ENCODE measurements at regions of chrX and their contacts with region 1.

Region 1: GRCh38 chrX:108224727-108225621 is 133.4 kb downstream of the ATG4A start:
- H3K4me3 ChIP-seq: no peak overlapping the region
- H3K27ac ChIP-seq: no peak overlapping the region
- H3K4me1 ChIP-seq: no peaks in the 10 kb centered on the region
- CTCF ChIP-seq: peak; percentile 36; the same call in 1 of the 2 replicates

Region 2: GRCh38 chrX:108199691-108200090 is 25.3 kb before region 1 on chrX:
- CTCF ChIA-PET with region 1: interaction called, 15 read pairs
- POLR2A ChIA-PET with region 1: no interaction called
- H3K4me3 ChIP-seq: no peak overlapping the region
- H3K27ac ChIP-seq: no peak overlapping the region
- H3K4me1 ChIP-seq: no peaks in the 10 kb centered on the region
- CTCF ChIP-seq: peak; percentile 47; the same call in 1 of the 2 replicates

Region 3: GRCh38 chrX:108209006-108209554 is 15.9 kb before region 1 on chrX:
- CTCF ChIA-PET with region 1: interaction called, 51 read pairs
- POLR2A ChIA-PET with region 1: no interaction called
- H3K4me3 ChIP-seq: no peak overlapping the region
- H3K27ac ChIP-seq: no peak overlapping the region
- H3K4me1 ChIP-seq: no peaks in the 10 kb centered on the region
- CTCF ChIP-seq: no peak

Region 4: DNA sequence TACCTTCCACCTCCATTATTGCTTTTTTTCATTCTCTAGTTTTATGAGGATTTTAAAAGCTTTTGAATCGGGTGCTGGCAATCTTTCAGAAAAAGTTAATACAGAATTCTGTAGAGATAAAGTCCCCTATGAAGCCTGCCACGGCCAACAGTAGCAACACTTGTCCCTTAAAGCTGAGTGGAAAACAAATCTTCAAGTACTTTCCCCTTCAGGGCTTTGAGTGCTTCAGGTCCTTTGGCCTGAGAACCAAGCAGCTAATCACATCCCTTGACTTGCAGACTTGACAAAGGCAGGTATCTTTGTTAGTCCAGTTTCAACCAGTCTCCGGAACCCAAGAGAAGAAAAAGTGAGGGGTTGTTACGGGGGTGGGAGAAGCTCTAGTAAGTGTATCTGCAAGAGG is 11.0 kb after region 1 on chrX:
- CTCF ChIA-PET with region 1: interaction called, 20 read pairs
- POLR2A ChIA-PET with region 1: no interaction called
- H3K4me3 ChIP-seq: no peak overlapping the region
- H3K27ac ChIP-seq: no peak overlapping the region
- H3K4me1 ChIP-seq: no peaks in the 10 kb centered on the region
- CTCF ChIP-seq: no peak

Region 5: DNA sequence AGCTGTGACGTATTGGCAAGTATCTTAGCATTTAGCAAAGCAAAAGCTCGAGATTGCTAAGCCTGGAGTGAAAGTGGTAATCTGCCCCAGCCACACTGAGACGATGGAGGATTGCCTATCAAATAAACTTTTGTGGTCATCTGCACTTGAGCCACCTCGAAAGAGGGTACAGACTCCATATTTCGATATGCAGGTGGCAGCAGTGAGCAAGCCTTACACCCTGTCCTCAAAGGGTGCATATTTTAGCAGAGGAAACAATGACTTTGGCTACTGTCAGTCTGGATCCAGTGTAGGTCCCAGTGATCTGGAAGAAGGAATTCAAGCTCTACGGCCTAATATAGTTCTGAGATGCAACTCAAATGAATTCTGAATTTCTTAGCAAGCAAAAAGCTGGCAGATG is 20.5 kb after region 1 on chrX:
- CTCF ChIA-PET with region 1: interaction called, 13 read pairs
- POLR2A ChIA-PET with region 1: no interaction called
- H3K4me3 ChIP-seq: no peak overlapping the region
- H3K27ac ChIP-seq: no peak overlapping the region
- H3K4me1 ChIP-seq: no peaks in the 10 kb centered on the region
- CTCF ChIP-seq: no peak

Region 6: GRCh38 chrX:108304210-108304609 is 79.2 kb after region 1 on chrX:
- CTCF ChIA-PET with region 1: interaction called, 82 read pairs
- POLR2A ChIA-PET with region 1: no interaction called
- H3K4me3 ChIP-seq: no peak overlapping the region
- H3K27ac ChIP-seq: no peak overlapping the region
- H3K4me1 ChIP-seq: peaks cover 2% of the 10 kb centered on the region; the same call in 1 of the 2 replicates
- CTCF ChIP-seq: peak; percentile 46; the same call in 1 of the 2 replicates

Region 7: GRCh38 chrX:108537005-108537404 is 312.0 kb after region 1 on chrX:
- CTCF ChIA-PET with region 1: interaction called, 71 read pairs
- POLR2A ChIA-PET with region 1: no interaction called
- H3K4me3 ChIP-seq: no peak overlapping the region
- H3K27ac ChIP-seq: no peak overlapping the region
- H3K4me1 ChIP-seq: no peaks in the 10 kb centered on the region
- CTCF ChIP-seq: peak; percentile 47